Heart right ventricle (tissue), 16 donors: ENCODE measurements at regions of chr7 and their contacts with region 1.

Region 1: GRCh38 chr7:127347567-127348246 is 44.8 kb downstream of the ZNF800 start:
- DNase-seq: peak; percentile 24 to 70
- ATAC-seq: peak; percentile 88 to 98 (median 93)
- H3K4me3 ChIP-seq: peak overlapping the region in 8 of 10 donors; percentile 7 to 46 (median 38)
- H3K27ac ChIP-seq: no peak overlapping the region
- H3K4me1 ChIP-seq: peaks cover 0 to 9% (median 0%) of the 10 kb centered on the region in 9 donors
- H3K27me3 ChIP-seq: peaks cover 0 to 3% (median 0%) of the 10 kb centered on the region in 7 donors
- CTCF ChIP-seq: peak; percentile 19 to 70 (median 53)

Region 2: DNA sequence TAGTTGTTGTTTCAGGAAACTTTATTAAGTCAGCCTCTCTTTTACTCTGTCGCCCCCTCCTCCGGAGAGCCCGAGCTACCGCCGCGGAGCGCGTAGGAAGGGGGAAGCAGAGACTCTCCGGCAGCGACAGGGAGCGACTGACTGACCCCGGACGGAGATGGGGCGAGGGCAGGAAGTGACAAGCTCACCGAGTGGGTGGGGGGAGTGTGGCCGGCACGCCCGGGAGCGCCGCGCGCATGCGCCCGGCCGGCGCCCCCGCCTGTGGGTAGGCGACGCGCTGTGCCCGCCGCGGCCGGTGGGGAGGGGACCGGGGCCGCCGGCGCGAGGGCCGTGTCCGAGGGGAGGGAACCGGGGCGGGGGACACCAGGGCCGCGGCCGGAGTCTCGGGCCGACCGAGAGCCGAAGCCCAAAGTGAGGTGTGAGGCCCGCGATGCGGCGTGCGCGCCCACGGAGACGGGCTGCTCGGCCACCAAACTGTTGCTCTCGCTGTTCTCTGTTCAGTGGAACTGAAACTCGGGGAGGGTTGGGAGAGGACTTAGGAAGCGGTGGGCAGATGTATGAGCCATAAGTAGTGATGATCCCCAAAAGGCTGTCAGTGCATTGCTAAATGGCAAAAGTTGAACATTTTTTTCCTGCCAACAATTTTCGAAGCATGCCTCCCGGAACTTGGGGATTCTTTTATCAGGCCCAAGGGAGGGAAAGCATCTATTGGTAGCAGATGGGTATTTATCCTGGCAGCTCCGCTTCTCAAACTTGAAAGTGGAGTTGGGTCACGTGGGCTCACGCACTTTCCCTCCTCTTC is 45.1 kb after region 1 on chr7 and contains the start of gene ZNF800:
- intact Hi-C with region 1: loop called in 2 of 10 experiments (anchors 5 to 10 kb)
- DNase-seq: peak; percentile 90 to 95
- ATAC-seq: peak; percentile 98 to 100 (median 99)
- H3K4me3 ChIP-seq: peak within 1 kb of the TSS; percentile 81 to 100 (median 90)
- H3K27ac ChIP-seq: peak within 1 kb of the TSS; percentile 83 to 99 (median 97)
- H3K4me1 ChIP-seq: peaks cover 0 to 44% (median 40%) of the 10 kb centered on the region in 9 donors
- H3K27me3 ChIP-seq: no peaks in the 10 kb centered on the region
- CTCF ChIP-seq: peak in 1 of 9 donors; percentile 7
- total RNA-seq, gene ZNF800: 17.5 to 35.8 (median 25.4) TPM

Region 3: GRCh38 chr7:127514499-127514898 is 166.8 kb after region 1 on chr7:
- intact Hi-C with region 1: loop called in 2 of 10 experiments (anchors 5 kb)
- DNase-seq: no peak
- ATAC-seq: peak in 3 of 8 donors; percentile 44 to 67 (median 50)
- H3K4me3 ChIP-seq: no peak overlapping the region
- H3K27ac ChIP-seq: no peak overlapping the region
- H3K4me1 ChIP-seq: no peaks in the 10 kb centered on the region
- H3K27me3 ChIP-seq: peaks cover 0 to 25% (median 12%) of the 10 kb centered on the region in 7 donors
- CTCF ChIP-seq: peak in 7 of 9 donors; percentile 26 to 57 (median 44)

Region 4: GRCh38 chr7:127751490-127752448 is 404.1 kb after region 1 on chr7:
- intact Hi-C with region 1: no loop called
- DNase-seq: no peak
- ATAC-seq: peak in 1 of 8 donors; percentile 31
- H3K4me3 ChIP-seq: no peak overlapping the region
- H3K27ac ChIP-seq: no peak overlapping the region
- H3K4me1 ChIP-seq: peaks cover 0 to 31% (median 6%) of the 10 kb centered on the region in 9 donors
- H3K27me3 ChIP-seq: no peaks in the 10 kb centered on the region
- CTCF ChIP-seq: no peak